ENCODE measurements at regions of chr21 and their contacts with region 1.

Region 1: GRCh38 chr21:17045214-17045853 is 467.5 kb upstream of the CXADR start:
- DNase-seq: no peak
- H3K4me3 ChIP-seq: no peak overlapping the region
- H3K27ac ChIP-seq: no peak overlapping the region
- H3K4me1 ChIP-seq: peaks cover 0 to 2% (median 0%) of the 10 kb centered on the region in 4 experiments; a peak in 1 of 7 replicates
- H3K27me3 ChIP-seq: no peaks in the 10 kb centered on the region
- CTCF ChIP-seq: peak in 2 of 3 experiments; percentile 9 to 40; a peak in 2 of 4 replicates
- EP300 ChIP-seq: no peak
- POLR2A ChIP-seq: no peak
- RAD21 ChIP-seq: peak; percentile 19 to 36; a peak in 3 of 4 replicates

Region 2: GRCh38 chr21:17032141-17032655 is 13.1 kb before region 1 on chr21:
- CTCF ChIA-PET with region 1: interaction called, 10 read pairs
- POLR2A ChIA-PET with region 1: no interaction called
- DNase-seq: no peak
- H3K4me3 ChIP-seq: no peak overlapping the region
- H3K27ac ChIP-seq: no peak overlapping the region
- H3K4me1 ChIP-seq: no peaks in the 10 kb centered on the region
- H3K27me3 ChIP-seq: no peaks in the 10 kb centered on the region
- CTCF ChIP-seq: no peak
- EP300 ChIP-seq: no peak
- POLR2A ChIP-seq: no peak
- RAD21 ChIP-seq: no peak

Measured in H1 (cell line).